Natural killer cell (primary cell): ENCODE measurements at regions of chr6 and their contacts with region 1.

Region 1: GRCh38 chr6:53348371-53349208 is at the start of gene ELOVL5:
- DNase-seq: peak; percentile 98 to 99
- ATAC-seq: peak; percentile 83 to 92 (median 86)
- H3K4me3 ChIP-seq: peak within 1 kb of the TSS; percentile 90
- H3K4me3 Mint-ChIP-seq: peak within 1 kb of the TSS; percentile 91
- H3K27ac ChIP-seq: peak within 1 kb of the TSS; percentile 96
- H3K27ac Mint-ChIP-seq: peak within 1 kb of the TSS; percentile 74 to 95
- H3K4me1 ChIP-seq: peaks cover 20% of the 10 kb centered on the region
- H3K4me1 Mint-ChIP-seq: peaks cover 44 to 48% of the 10 kb centered on the region in 2 donors
- H3K27me3 ChIP-seq: no peaks in the 10 kb centered on the region
- H3K27me3 Mint-ChIP-seq: peaks cover 5 to 11% of the 10 kb centered on the region in 2 donors
- CTCF ChIP-seq: no peak
- total RNA-seq, gene ELOVL5: 72.1 to 99.5 (median 73.7) TPM

Region 2: DNA sequence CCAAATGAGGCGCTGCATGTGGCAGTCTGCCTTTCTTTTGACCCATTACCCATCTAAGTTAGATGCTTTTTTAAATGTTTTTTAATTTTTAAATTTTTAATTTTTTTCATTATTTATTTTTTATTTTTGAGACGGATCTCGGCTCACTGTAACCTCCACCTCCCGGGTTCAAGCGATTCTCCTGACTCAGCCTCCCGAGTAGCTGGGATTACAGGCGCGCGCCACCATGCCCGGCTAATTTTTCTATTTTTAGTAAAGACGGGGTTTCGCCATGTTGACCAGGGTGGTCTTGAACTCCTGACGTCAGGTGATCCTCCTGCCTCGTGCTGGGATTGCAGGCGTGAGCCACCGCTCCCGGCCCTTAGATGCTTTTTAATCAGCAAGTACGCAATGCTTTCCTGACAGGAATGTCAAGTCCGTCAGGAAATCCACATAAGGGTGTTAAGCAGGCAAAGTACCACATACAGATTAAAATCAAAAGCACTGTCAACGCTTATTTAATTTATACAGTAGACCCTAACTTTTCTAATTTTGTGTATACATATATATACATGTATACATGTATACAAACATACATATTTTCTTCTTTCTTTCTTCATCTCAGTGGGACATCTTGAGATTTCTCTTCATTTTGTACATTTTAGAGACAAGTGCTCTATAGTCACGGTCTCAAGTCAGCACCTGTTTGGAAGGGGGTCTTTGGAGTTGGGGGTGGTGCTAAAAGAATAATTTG is 352.5 kb before region 1 on chr6:
- intact Hi-C with region 1: loop called (anchors 10 kb)
- DNase-seq: peak; percentile 27 to 70
- ATAC-seq: peak in 1 of 3 donors; percentile 1
- H3K4me3 ChIP-seq: peak overlapping the region; percentile 14
- H3K4me3 Mint-ChIP-seq: peak overlapping the region; percentile 92
- H3K27ac ChIP-seq: peak overlapping the region; percentile 36
- H3K27ac Mint-ChIP-seq: peak overlapping the region; percentile 95 to 99
- H3K4me1 ChIP-seq: peaks cover 16% of the 10 kb centered on the region
- H3K4me1 Mint-ChIP-seq: peaks cover 32% of the 10 kb centered on the region in 2 donors
- H3K27me3 ChIP-seq: no peaks in the 10 kb centered on the region
- H3K27me3 Mint-ChIP-seq: peaks cover 0 to 6% of the 10 kb centered on the region in 2 donors
- CTCF ChIP-seq: no peak

Region 3: DNA sequence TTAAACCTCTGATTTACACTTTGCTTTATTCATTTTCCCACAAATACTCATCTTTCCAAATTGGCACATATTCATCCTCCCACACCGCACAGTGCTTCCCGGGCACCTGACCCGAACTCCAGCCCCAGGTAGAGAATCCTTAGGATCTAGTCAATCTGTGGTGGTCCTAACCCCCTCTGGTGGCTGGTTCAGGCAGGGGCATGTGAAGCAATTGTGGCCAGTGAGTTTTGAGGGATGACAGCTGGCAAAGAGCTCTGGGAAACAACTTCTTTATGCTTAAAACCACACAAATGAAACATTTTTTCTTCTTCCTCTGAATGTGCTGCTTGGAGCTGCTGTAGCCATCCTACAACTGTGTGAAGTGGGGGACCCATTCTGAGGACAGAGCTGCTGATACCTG is 54.5 kb before region 1 on chr6:
- intact Hi-C with region 1: loop called (anchors 10 kb)
- DNase-seq: peak in 1 of 2 donors; percentile 51
- ATAC-seq: peak in 1 of 3 donors; percentile 41
- H3K4me3 ChIP-seq: no peak overlapping the region
- H3K4me3 Mint-ChIP-seq: no peak overlapping the region
- H3K27ac ChIP-seq: no peak overlapping the region
- H3K27ac Mint-ChIP-seq: peak overlapping the region; percentile 24 to 88
- H3K4me1 ChIP-seq: peaks cover 27% of the 10 kb centered on the region
- H3K4me1 Mint-ChIP-seq: peaks cover 76 to 78% of the 10 kb centered on the region in 2 donors
- H3K27me3 ChIP-seq: no peaks in the 10 kb centered on the region
- H3K27me3 Mint-ChIP-seq: no peaks in the 10 kb centered on the region
- CTCF ChIP-seq: peak; percentile 44

Region 4: DNA sequence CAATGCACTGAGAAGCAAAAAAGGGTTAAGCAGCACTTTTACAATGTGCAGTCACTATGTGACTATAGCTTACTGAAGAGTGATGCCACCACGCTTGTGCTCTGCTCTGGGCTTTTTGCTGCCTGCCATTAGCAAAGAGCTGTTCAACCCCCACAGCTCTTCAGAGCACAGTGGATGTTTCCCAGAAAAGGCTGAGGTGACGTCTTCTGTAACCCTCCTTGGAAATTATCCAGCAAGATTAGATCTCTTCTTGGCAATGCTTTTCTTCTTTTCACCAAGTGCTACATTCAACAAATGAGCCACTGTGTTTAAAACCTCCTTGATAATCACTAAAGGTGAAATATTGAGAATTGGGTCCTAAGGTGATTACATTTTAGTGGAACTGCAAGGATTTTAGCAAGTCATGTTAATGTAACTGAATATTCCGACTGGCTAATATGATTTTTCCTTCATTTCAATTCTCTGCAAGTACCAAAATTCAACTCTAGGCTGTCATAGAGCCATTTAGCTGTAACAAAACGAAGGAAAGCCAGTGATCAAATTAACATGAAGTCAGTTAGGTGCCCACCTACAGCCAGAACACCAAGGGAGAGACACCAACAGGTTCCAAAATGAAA is 34.7 kb before region 1 on chr6:
- intact Hi-C with region 1: loop called (anchors 5 kb)
- DNase-seq: no peak
- ATAC-seq: no peak
- H3K4me3 ChIP-seq: no peak overlapping the region
- H3K4me3 Mint-ChIP-seq: peak overlapping the region; percentile 4
- H3K27ac ChIP-seq: no peak overlapping the region
- H3K27ac Mint-ChIP-seq: peak overlapping the region; percentile 60
- H3K4me1 ChIP-seq: peaks cover 40% of the 10 kb centered on the region
- H3K4me1 Mint-ChIP-seq: peaks cover 80 to 90% of the 10 kb centered on the region in 2 donors
- H3K27me3 ChIP-seq: no peaks in the 10 kb centered on the region
- H3K27me3 Mint-ChIP-seq: no peaks in the 10 kb centered on the region
- CTCF ChIP-seq: no peak

Region 5: DNA sequence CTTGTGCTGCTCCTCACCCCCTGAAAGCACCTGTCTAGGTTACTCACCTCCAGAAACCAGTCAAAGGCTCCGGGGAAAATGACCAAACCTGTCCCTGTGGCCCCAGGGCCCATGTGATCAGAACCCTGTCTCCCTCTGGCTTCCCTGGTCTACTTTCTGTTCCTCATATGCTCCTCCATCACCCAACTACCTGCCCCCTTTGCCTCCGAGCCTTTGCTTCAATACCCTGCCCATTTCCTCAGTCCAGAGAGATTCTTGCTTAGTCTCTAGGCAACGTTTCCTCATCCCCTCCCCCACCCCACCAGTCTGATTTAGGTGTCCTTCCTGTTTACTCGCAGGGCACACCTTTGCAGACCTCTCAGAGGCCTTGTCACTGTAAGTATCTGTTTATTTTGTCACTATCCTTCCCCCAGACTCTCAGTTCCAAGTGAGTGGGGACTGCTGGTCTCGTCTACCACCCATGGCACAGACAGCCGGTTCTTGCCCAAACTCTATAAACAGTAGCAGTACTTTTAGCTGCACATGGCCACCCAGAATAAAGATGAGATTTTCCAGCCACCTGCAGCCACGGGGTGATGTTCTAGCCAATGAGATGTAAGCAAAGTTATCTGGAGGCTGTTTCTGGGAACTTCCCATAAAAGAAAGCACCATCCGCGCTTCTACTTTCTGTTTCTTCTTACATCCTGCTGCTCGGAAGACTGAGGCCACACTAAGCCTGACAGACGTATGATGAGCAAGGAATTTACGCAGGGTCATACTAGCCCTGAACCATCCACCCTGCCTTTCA is 13.2 kb before region 1 on chr6:
- intact Hi-C with region 1: loop called (anchors 1 kb)
- DNase-seq: peak; percentile 51 to 92
- ATAC-seq: peak; percentile 85 to 90 (median 87)
- H3K4me3 ChIP-seq: peak overlapping the region; percentile 35
- H3K4me3 Mint-ChIP-seq: peak overlapping the region; percentile 89
- H3K27ac ChIP-seq: peak overlapping the region; percentile 93
- H3K27ac Mint-ChIP-seq: peak overlapping the region; percentile 98 to 99
- H3K4me1 ChIP-seq: peaks cover 39% of the 10 kb centered on the region
- H3K4me1 Mint-ChIP-seq: peaks cover 89% of the 10 kb centered on the region in 2 donors
- H3K27me3 ChIP-seq: no peaks in the 10 kb centered on the region
- H3K27me3 Mint-ChIP-seq: no peaks in the 10 kb centered on the region
- CTCF ChIP-seq: no peak

Region 6: DNA sequence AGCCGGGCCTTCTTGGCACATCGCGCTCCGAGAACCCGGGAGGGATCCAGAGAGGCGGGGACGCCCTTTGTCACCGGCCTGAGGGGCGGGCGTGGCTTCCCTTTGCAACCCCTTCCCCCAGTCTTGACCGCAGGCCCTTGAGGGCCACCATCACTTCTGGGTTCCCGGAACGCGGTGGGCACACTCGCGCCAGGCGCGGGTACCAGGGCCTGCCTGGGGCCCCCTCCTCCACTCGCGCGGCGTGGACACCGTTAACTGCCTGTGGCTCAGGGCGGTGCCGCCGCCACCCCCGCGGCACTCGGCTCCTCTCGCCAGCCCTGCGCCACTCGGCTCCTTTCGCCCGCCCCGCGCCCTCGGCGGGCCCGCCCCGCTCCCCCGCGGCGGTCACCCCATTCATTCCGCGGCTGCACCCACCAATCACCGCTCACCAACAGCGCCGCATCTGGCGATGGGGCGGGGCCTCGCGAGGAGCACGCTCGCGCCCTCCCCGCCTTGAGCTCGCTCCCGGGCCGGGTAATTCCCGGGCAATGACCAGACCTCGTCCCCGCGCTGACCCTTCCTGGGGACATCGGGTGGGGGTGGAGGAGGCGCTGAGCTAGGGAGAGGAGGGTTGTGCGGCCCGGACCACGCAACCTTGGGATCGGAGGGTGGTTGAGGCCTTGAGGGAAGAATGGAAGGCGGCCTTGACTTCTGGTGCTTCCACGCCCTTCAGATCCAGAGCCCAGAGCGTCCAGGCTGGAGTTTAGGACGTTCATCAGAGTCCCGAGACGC is 10.7 kb after region 1 on chr6:
- intact Hi-C with region 1: loop called (anchors 1 kb)
- DNase-seq: peak; percentile 92 to 94
- ATAC-seq: peak; percentile 87 to 96 (median 94)
- H3K4me3 ChIP-seq: peak overlapping the region; percentile 64
- H3K4me3 Mint-ChIP-seq: peak overlapping the region; percentile 93
- H3K27ac ChIP-seq: peak overlapping the region; percentile 95
- H3K27ac Mint-ChIP-seq: peak overlapping the region; percentile 97 to 99
- H3K4me1 ChIP-seq: peaks cover 29% of the 10 kb centered on the region
- H3K4me1 Mint-ChIP-seq: peaks cover 42 to 44% of the 10 kb centered on the region in 2 donors
- H3K27me3 ChIP-seq: no peaks in the 10 kb centered on the region
- H3K27me3 Mint-ChIP-seq: no peaks in the 10 kb centered on the region
- CTCF ChIP-seq: no peak